Posterior vena cava (tissue), 2 donors: ENCODE measurements at regions of chr4 and their contacts with region 1.

Region 1: GRCh38 chr4:176627916-176628315 is 164.8 kb downstream of the VEGFC start:
- DNase-seq: no peak

Region 2: DNA sequence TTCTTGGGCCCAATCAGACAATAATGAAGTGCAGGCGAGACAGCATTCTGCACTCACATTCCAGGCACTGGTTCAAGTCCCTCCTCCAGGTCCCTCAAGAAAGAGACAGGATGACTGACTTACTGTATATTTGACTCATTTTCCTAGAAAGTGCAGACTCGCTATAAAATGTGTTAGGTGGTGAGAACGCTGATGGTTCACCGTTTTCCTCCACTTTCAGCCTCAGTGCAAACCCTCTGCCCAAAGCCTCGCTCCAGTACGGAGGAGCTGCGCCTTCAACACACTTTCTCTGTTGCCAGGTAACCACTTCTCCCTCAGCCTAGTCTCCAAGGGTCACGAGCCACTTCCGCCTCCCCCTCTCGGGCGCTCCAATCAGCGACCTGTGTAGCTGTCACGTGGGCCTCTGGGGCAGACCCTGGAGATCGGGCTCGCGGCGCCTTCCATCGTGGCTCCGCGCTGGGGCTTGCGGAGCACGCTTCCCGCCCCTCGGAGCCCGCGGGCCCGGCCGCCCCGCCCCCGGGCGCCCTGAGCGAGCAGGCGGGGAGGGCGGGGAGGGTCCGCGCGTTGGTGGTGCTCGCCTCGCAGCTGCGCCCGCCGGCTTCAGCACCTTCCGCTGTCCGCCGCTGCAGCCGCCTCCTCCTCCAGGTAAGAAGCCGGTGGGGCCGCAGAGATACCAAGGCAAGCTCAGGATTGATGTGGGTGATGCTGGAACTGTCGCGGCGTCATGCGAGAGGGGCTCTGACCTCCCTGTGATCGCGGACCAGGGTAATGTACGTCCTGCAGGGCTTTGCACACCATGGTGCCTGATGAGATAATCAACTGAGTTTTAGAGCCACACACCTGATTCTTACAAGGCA is 562.3 kb before region 1 on chr4 and contains the start of gene WDR17:
- intact Hi-C with region 1: loop called in 1 of 2 experiments (anchors 5 kb)
- DNase-seq: peak; percentile 94
- total RNA-seq, gene WDR17: 2.5 to 3.0 TPM